Left cardiac atrium (tissue), 4 donors: ENCODE measurements at regions of chr16 and their contacts with region 1.

Region 1: DNA sequence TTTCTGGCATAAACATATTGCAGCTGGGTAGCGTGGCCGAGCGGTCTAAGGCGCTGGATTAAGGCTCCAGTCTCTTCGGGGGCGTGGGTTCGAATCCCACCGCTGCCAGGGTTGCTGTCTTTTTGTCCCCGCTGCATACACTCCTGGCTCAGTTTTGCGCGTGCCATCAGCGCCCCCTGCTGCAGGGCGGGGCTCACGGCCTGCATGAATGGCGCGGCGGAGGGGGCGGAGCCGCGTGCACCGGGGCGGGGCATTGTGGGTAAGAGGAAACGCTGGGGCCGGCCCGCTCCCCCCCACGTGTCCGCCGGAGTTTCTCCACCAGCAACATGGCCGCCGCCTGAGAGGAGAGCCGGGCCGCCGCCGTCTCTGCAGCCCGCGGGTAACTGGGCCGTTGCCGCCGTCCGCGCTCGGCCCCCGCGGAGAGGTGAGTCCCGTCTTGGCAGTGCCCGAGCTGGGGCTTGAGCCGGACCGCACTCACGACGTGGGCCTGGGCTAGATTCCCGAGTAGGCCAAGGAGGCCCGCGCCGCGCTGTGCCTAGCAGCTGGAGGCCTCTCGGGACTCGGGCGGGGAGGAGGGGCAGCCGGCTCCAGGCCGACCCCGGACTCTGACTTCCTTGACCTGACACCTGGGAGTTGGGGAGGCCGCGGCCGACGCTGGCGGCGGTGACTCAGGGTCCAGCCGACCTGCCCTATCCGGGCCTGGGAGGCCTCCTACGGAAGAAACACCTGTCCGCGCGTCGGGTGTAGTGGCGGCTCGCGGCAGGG is at the start of gene POLR3E:
- DNase-seq: peak; percentile 99
- ATAC-seq: peak; percentile 96
- total RNA-seq, gene POLR3E: 27.2 to 33.6 TPM

Region 2: GRCh38 chr16:22151246-22151998 is 145.9 kb before region 1 on chr16:
- intact Hi-C with region 1: no loop called
- DNase-seq: no peak
- ATAC-seq: no peak

Region 3: GRCh38 chr16:22195695-22196558 is 101.4 kb before region 1 on chr16:
- intact Hi-C with region 1: loop called (anchors 1 to 5 kb)
- DNase-seq: peak; percentile 84
- ATAC-seq: peak; percentile 43 to 46

Region 4: DNA sequence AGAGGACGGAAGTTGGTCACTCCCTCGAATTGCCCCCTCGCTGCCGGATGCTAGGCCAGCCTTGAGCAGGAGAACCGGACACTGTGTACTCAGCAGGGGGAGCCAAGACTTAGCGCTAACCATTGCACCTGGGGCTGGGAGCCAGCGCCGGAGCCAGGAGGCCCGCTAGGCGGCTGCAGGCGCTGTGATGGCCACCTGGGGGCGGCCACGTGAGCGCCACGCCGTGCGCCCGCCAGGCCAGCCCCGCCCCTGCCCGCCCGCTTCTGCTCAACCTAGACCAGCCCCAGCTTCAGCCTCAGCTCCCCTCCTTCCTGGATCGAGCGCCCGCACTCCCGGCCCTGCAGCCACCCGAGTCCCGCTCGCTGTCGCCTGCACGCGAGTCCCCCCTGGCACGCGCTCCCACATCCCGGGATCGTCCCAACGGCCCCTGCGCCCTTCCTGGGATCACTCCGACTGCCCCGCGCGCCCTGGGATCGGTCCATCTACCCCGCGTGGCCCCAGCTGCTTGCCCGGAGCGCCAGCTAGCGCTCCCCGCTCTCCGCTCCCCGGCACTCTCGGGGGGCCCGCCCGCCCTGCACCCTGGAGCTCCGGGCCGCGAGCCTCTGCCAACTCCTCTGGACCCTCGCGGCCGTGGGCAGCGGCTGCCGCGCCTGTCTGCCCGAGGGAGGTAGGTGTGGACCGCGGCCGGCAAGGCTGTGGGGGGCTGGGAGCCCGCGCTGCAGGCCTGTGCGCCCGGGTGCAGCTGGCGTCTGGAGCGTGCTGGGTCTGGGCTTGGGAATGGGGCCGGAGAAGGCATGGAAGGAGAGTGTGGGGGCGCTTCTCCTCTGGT is 91.1 kb before region 1 on chr16 and contains the start of gene EEF2K:
- intact Hi-C with region 1: loop called in 1 of 2 experiments (anchors 1 kb)
- DNase-seq: peak; percentile 93
- ATAC-seq: peak; percentile 93 to 94
- total RNA-seq, gene EEF2K: 32.0 to 34.0 TPM